ENCODE measurements at regions of chr9 and their contacts with region 1.

Region 1: DNA sequence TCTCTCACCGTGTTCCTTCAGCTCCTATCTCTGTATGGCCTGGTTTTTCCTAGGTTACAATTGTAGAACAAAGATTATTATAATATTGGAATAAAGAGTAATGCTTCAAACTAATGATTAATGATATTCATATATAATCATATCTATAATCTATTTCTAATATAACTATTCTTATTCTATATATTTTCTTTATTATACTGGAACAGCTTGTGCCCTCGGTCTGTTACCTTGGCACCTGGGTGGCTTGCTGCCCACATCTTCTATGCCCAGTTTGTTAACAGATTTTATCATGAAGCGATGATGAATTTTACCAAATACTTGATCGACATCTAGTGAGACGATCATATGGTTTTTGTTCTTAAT is 363.6 kb upstream of the TYRP1 start:
- DNase-seq: no peak
- ATAC-seq: no peak
- H3K4me3 Mint-ChIP-seq: no peak overlapping the region
- H3K27ac Mint-ChIP-seq: no peak overlapping the region
- H3K4me1 Mint-ChIP-seq: no peaks in the 10 kb centered on the region
- H3K27me3 Mint-ChIP-seq: no peaks in the 10 kb centered on the region
- CTCF ChIP-seq: no peak

Region 2: DNA sequence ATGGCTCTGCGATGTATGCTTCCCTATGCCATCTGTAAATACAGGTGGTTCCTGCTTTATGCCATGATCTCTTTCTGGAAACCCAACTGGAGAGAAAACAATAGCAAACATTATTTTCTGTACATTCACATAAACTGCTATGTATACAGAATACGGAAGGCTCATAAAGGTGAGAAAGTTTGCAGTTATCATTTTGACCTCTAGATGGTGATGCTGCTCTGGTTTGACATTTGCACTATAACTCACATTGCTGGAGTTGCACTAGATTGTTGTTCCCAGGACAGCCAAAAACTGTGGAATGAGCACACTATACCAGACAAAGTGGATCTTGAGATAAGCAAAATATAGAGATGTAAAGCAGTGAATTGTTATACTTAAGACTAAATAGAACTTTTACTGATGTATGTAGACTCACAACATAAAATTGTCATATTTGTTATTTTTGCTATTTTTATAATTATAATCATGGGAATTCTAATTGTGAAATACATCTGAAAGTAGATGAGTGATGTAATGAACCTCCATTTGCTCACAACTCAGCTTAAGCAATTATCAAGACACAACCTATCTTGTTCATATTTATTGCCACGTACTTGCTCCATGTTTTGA is 1963.3 kb before region 1 on chr9:
- CTCF ChIA-PET with region 1: no interaction called
- POLR2A ChIA-PET with region 1: no interaction called
- intact Hi-C with region 1: loop called (anchors 5 kb)
- DNase-seq: no peak
- ATAC-seq: no peak
- H3K4me3 Mint-ChIP-seq: no peak overlapping the region
- H3K27ac Mint-ChIP-seq: no peak overlapping the region
- H3K4me1 Mint-ChIP-seq: no peaks in the 10 kb centered on the region
- H3K27me3 Mint-ChIP-seq: no peaks in the 10 kb centered on the region
- CTCF ChIP-seq: no peak

Region 3: GRCh38 chr9:12604164-12604821 is 274.7 kb after region 1 on chr9:
- CTCF ChIA-PET with region 1: no interaction called
- POLR2A ChIA-PET with region 1: no interaction called
- intact Hi-C with region 1: no loop called
- DNase-seq: no peak
- ATAC-seq: no peak
- H3K4me3 Mint-ChIP-seq: no peak overlapping the region
- H3K27ac Mint-ChIP-seq: no peak overlapping the region
- H3K4me1 Mint-ChIP-seq: no peaks in the 10 kb centered on the region
- H3K27me3 Mint-ChIP-seq: no peaks in the 10 kb centered on the region
- CTCF ChIP-seq: no peak

Measured in activated B cell treated with CpG ODN at 0.5 μM for 24 hours (primary cell).